Heart left ventricle (tissue), 16 donors: ENCODE measurements at regions of chr17 and their contacts with region 1.

Region 1: GRCh38 chr17:27455914-27456680 is at the start of gene KSR1:
- DNase-seq: peak; percentile 80 to 90 (median 84)
- ATAC-seq: peak; percentile 63 to 96 (median 90)
- H3K4me3 ChIP-seq: peak within 1 kb of the TSS; percentile 73 to 92 (median 82)
- H3K27ac ChIP-seq: peak within 1 kb of the TSS; percentile 59 to 89 (median 77)
- H3K4me1 ChIP-seq: peaks cover 0 to 36% (median 12%) of the 10 kb centered on the region in 12 donors
- H3K27me3 ChIP-seq: no peaks in the 10 kb centered on the region
- CTCF ChIP-seq: peak; percentile 22 to 68 (median 48)
- POLR2A ChIP-seq: peak in 1 of 2 donors; percentile 73
- total RNA-seq, gene KSR1: 6.1 to 31.1 (median 7.5) TPM

Region 2: GRCh38 chr17:27245230-27245696 is 210.8 kb before region 1 on chr17:
- intact Hi-C with region 1: loop called in 1 of 10 experiments (anchors 5 kb)
- DNase-seq: peak; percentile 83 to 92 (median 89)
- ATAC-seq: peak; percentile 91 to 96 (median 93)
- H3K4me3 ChIP-seq: peak overlapping the region in 7 of 12 donors; percentile 1 to 38 (median 19)
- H3K27ac ChIP-seq: peak overlapping the region; percentile 78 to 97 (median 84)
- H3K4me1 ChIP-seq: peaks cover 0 to 72% (median 39%) of the 10 kb centered on the region in 12 donors
- H3K27me3 ChIP-seq: no peaks in the 10 kb centered on the region
- CTCF ChIP-seq: peak; percentile 57 to 91 (median 80)
- POLR2A ChIP-seq: no peak

Region 3: GRCh38 chr17:27489045-27489715 is 33.1 kb after region 1 on chr17:
- intact Hi-C with region 1: loop called in 2 of 10 experiments (anchors 2 to 5 kb)
- DNase-seq: peak; percentile 59 to 93 (median 86)
- ATAC-seq: peak; percentile 71 to 91 (median 88)
- H3K4me3 ChIP-seq: no peak overlapping the region
- H3K27ac ChIP-seq: peak overlapping the region in 9 of 12 donors; percentile 1 to 86 (median 49)
- H3K4me1 ChIP-seq: peaks cover 0 to 64% (median 32%) of the 10 kb centered on the region in 12 donors
- H3K27me3 ChIP-seq: no peaks in the 10 kb centered on the region
- CTCF ChIP-seq: no peak
- POLR2A ChIP-seq: no peak

Region 4: DNA sequence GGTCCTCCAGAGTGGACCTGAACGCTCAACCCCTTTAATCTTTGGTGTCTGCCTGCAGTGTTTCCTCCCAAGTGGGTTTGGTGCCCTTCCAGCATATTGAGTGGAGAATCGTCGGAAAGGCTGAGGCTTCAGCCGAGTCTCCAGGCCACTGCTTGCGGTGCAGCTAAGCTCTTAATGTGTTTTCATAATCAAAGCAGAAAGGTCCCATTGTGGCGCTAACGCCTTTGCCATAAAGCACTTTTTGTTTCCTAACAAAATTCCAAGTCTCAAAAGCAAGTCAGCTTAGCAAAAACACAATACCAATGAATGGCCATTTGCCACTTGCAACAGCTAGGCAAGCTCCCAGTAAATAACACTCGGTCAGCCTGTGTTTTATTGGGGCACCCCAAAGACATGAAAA is 57.8 kb after region 1 on chr17:
- intact Hi-C with region 1: loop called in 2 of 10 experiments (anchors 5 to 10 kb)
- DNase-seq: no peak
- ATAC-seq: no peak
- H3K4me3 ChIP-seq: no peak overlapping the region
- H3K27ac ChIP-seq: no peak overlapping the region
- H3K4me1 ChIP-seq: peaks cover 0 to 17% (median 2%) of the 10 kb centered on the region in 12 donors
- H3K27me3 ChIP-seq: no peaks in the 10 kb centered on the region
- CTCF ChIP-seq: no peak
- POLR2A ChIP-seq: no peak

Region 5: GRCh38 chr17:27569257-27569722 is 113.2 kb after region 1 on chr17:
- intact Hi-C with region 1: loop called in 3 of 10 experiments (anchors 5 to 10 kb)
- DNase-seq: no peak
- ATAC-seq: peak in 1 of 4 donors; percentile 36
- H3K4me3 ChIP-seq: no peak overlapping the region
- H3K27ac ChIP-seq: peak overlapping the region in 1 of 12 donors; percentile 32
- H3K4me1 ChIP-seq: peaks cover 0 to 65% (median 38%) of the 10 kb centered on the region in 12 donors
- H3K27me3 ChIP-seq: no peaks in the 10 kb centered on the region
- CTCF ChIP-seq: peak; percentile 28 to 63 (median 43)
- POLR2A ChIP-seq: no peak

Region 6: GRCh38 chr17:27601069-27601975 is 145.2 kb after region 1 on chr17:
- intact Hi-C with region 1: loop called in 9 of 10 experiments (anchors 1 to 10 kb)
- DNase-seq: peak; percentile 72 to 82 (median 79)
- ATAC-seq: peak in 3 of 4 donors; percentile 54 to 57 (median 55)
- H3K4me3 ChIP-seq: no peak overlapping the region
- H3K27ac ChIP-seq: no peak overlapping the region
- H3K4me1 ChIP-seq: peaks cover 0 to 24% (median 7%) of the 10 kb centered on the region in 12 donors
- H3K27me3 ChIP-seq: no peaks in the 10 kb centered on the region
- CTCF ChIP-seq: peak; percentile 91 to 96 (median 94)
- POLR2A ChIP-seq: no peak